Activated B cell treated with CpG ODN at 0.5 μM for 24 hours (primary cell): ENCODE measurements at regions of chr22 and their contacts with region 1.

Region 1: GRCh38 chr22:17597217-17597616 is 31.3 kb downstream of the ATP6V1E1 start:
- DNase-seq: no peak
- ATAC-seq: no peak
- H3K4me3 Mint-ChIP-seq: no peak overlapping the region
- H3K27ac Mint-ChIP-seq: no peak overlapping the region
- H3K4me1 Mint-ChIP-seq: peaks cover 33% of the 10 kb centered on the region
- H3K27me3 Mint-ChIP-seq: no peaks in the 10 kb centered on the region
- CTCF ChIP-seq: no peak

Region 2: DNA sequence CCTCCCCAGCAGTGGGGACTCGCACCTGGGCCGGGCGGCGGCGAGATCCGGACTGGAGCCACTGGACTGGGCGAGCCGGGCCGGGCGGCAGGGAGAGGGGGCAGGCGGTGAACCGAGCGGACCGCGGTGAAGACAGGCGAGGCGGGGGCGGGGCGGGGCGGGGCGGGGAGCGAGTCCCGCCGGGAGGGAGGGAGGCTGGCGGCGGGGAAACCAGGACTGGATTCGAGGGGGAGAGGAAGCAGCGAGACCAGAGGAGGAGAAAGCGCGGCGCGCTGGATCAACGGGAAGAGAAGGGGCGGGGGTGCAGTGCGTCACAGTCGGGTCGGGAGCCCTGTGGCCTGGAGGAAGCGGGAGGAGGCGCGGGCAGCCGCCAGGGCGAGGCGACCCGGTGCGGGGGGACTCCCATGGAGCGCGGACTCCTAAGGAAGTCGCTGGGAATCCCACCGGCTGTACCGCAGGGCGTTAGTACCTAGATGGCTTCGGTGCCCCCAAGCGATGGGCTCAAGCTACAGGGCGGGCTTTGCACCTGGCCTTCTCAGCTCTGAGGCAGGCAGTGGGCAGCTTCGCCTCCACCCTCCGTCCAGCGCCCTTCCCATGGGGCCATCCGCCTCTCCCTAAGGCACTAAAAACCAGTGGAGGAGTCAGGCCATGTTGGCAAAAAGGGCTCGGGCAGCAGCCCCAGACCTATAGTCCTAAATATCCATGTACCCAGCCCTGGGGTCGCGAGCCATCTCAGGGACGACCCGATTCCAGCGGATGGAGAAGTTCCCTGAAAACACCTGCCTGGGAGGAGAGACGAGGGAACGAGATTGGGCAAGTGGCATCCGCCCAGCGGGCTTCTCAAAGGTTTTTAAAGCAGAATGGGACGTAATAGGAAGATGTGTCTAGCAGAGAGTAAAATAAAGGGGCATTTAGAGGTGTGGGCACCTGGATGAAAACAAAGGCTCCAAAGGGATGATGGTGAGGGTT is 475.7 kb before region 1 on chr22 and contains the start of gene TMEM121B:
- CTCF ChIA-PET with region 1: no interaction called
- POLR2A ChIA-PET with region 1: no interaction called
- intact Hi-C with region 1: no loop called
- DNase-seq: no peak
- ATAC-seq: no peak
- H3K4me3 Mint-ChIP-seq: peak within 1 kb of the TSS; percentile 35
- H3K27ac Mint-ChIP-seq: no peak within 1 kb of the TSS
- H3K4me1 Mint-ChIP-seq: peaks cover 32% of the 10 kb centered on the region
- H3K27me3 Mint-ChIP-seq: peaks cover 27% of the 10 kb centered on the region
- CTCF ChIP-seq: no peak
- total RNA-seq, gene TMEM121B: 0.16 and 0.17 TPM in 2 replicates

Region 3: GRCh38 chr22:17562906-17563870 is 34.0 kb before region 1 on chr22 and contains the start of gene SLC25A18:
- CTCF ChIA-PET with region 1: interaction called, 9 read pairs
- POLR2A ChIA-PET with region 1: no interaction called
- intact Hi-C with region 1: loop called (anchors 2 kb)
- DNase-seq: no peak
- ATAC-seq: no peak
- H3K4me3 Mint-ChIP-seq: no peak within 1 kb of the TSS
- H3K27ac Mint-ChIP-seq: no peak within 1 kb of the TSS
- H3K4me1 Mint-ChIP-seq: no peaks in the 10 kb centered on the region
- H3K27me3 Mint-ChIP-seq: peaks cover 5% of the 10 kb centered on the region
- CTCF ChIP-seq: no peak
- total RNA-seq, gene SLC25A18: 0.15 and 0.27 TPM in 2 replicates

Region 4: GRCh38 chr22:17628304-17629166 is 31.3 kb after region 1 on chr22 and contains the start of gene ATP6V1E1:
- CTCF ChIA-PET with region 1: no interaction called
- POLR2A ChIA-PET with region 1: interaction called, 9 read pairs
- intact Hi-C with region 1: loop called (anchors 1 kb)
- DNase-seq: peak; percentile 94
- ATAC-seq: peak; percentile 100
- H3K4me3 Mint-ChIP-seq: peak within 1 kb of the TSS; percentile 98
- H3K27ac Mint-ChIP-seq: peak within 1 kb of the TSS; percentile 97
- H3K4me1 Mint-ChIP-seq: peaks cover 32% of the 10 kb centered on the region
- H3K27me3 Mint-ChIP-seq: no peaks in the 10 kb centered on the region
- CTCF ChIP-seq: no peak
- total RNA-seq, gene ATP6V1E1: 73.9 and 74.0 TPM in 2 replicates

Region 5: GRCh38 chr22:17797721-17798559 is 200.7 kb after region 1 on chr22:
- CTCF ChIA-PET with region 1: no interaction called
- POLR2A ChIA-PET with region 1: interaction called, 8 read pairs
- intact Hi-C with region 1: loop called (anchors 1 kb)
- DNase-seq: peak; percentile 41
- ATAC-seq: peak; percentile 62
- H3K4me3 Mint-ChIP-seq: peak overlapping the region; percentile 49
- H3K27ac Mint-ChIP-seq: peak overlapping the region; percentile 99
- H3K4me1 Mint-ChIP-seq: peaks cover 87% of the 10 kb centered on the region
- H3K27me3 Mint-ChIP-seq: no peaks in the 10 kb centered on the region
- CTCF ChIP-seq: no peak

Region 6: GRCh38 chr22:18130018-18130417 is 532.8 kb after region 1 on chr22:
- CTCF ChIA-PET with region 1: no interaction called
- POLR2A ChIA-PET with region 1: no interaction called
- intact Hi-C with region 1: no loop called
- DNase-seq: no peak
- ATAC-seq: no peak
- H3K4me3 Mint-ChIP-seq: no peak overlapping the region
- H3K27ac Mint-ChIP-seq: no peak overlapping the region
- H3K4me1 Mint-ChIP-seq: no peaks in the 10 kb centered on the region
- H3K27me3 Mint-ChIP-seq: no peaks in the 10 kb centered on the region
- CTCF ChIP-seq: no peak